ENCODE measurements at regions of chr2 and their contacts with region 1.

Region 1: DNA sequence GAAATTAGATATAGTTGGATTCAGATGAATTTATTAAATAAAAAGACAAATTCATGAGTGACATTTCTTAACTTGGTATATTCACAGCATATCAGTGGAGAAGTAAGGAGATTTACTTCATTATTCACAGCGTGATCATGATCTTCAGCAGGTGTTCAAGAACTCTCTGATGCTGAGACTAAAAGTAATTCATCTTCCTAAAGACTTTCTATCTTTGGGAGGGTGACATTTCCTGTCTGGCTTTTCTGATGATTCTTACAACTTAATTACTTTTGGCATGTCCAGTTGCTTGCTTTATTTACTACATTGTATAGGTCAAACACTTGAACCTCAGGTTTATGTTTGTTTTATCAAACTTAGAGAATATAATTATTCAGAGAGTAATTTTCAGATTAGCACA is 224.6 kb downstream of the PLCL1 start:
- DNase-seq: no peak
- ATAC-seq: no peak
- H3K4me3 Mint-ChIP-seq: no peak overlapping the region
- H3K27ac Mint-ChIP-seq: no peak overlapping the region
- H3K4me1 Mint-ChIP-seq: peaks cover 31% of the 10 kb centered on the region
- H3K27me3 Mint-ChIP-seq: no peaks in the 10 kb centered on the region

Region 2: GRCh38 chr2:198004921-198005829 is 23.8 kb before region 1 on chr2:
- CTCF ChIA-PET with region 1: interaction called, 3 read pairs
- POLR2A ChIA-PET with region 1: no interaction called
- intact Hi-C with region 1: loop called in 1 of 2 experiments (anchors 2 kb)
- DNase-seq: peak; percentile 71
- ATAC-seq: peak; percentile 67
- H3K4me3 Mint-ChIP-seq: peak overlapping the region; percentile 32
- H3K27ac Mint-ChIP-seq: peak overlapping the region; percentile 88
- H3K4me1 Mint-ChIP-seq: peaks cover 83% of the 10 kb centered on the region
- H3K27me3 Mint-ChIP-seq: no peaks in the 10 kb centered on the region